Sciatic nerve (tissue), 2 donors: ENCODE measurements at regions of chr22 and their contacts with region 1.

Region 1: DNA sequence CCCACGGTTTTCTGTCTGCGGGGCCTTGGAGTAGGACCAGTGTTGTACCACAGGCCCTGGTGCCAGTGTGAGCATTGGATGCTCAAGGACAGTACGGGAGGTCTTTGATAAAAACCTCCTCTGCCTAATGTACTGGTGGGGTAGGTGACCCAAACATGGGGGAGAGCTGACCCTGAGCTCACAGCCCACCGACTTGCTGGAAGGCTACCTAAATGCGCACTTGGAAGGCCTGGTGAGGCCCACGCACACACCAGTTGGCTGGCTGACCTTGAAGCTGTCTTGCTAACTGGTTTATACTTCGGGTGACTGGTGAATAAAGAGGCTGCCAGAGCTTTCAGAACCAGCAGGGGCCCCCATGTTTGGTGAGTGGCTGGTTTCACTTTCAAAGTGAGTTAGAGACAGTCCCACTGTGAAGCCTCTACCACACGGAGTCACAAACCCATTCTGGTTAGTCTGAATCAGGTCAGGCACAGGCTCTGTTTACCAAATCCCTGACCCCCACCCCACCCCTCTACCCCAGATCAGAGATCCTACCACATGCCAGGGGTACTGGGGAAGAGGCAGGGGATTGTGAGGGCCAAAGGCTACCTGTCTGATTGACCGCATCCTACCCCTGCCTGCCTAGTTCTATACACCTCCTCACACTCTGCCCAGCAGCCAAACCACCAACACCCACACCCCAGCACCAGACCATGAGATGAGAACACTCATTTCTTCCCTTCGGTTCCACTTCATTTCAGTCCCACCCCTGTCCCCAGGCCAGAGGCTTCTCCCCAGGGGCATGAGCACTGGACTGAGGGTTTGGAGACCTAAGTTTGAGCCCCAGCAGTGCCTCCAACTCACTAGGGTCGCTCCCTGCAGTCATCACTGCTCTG is 12.7 kb upstream of the IL2RB start:
- DNase-seq: no peak
- ATAC-seq: no peak

Region 2: GRCh38 chr22:37207048-37207821 is 44.8 kb after region 1 on chr22:
- intact Hi-C with region 1: loop called (anchors 5 kb)
- DNase-seq: peak; percentile 47
- ATAC-seq: no peak